Sigmoid colon (tissue), 7 donors: ENCODE measurements at regions of chr11 and their contacts with region 1.

Region 1: GRCh38 chr11:20110908-20111669 is 49.2 kb downstream of the DBX1 start:
- DNase-seq: no peak
- H3K4me3 ChIP-seq: no peak overlapping the region
- H3K27ac ChIP-seq: peak overlapping the region; percentile 79 to 93 (median 88)
- H3K4me1 ChIP-seq: peaks cover 0 to 81% (median 69%) of the 10 kb centered on the region in 4 donors
- H3K27me3 ChIP-seq: no peaks in the 10 kb centered on the region
- CTCF ChIP-seq: peak; percentile 23 to 74 (median 70)
- EP300 ChIP-seq: peak; percentile 44 to 93 (median 89)
- POLR2A ChIP-seq: no peak

Region 2: GRCh38 chr11:19931141-19931770 is 179.8 kb before region 1 on chr11:
- intact Hi-C with region 1: loop called (anchors 1 kb)
- DNase-seq: peak; percentile 91
- H3K4me3 ChIP-seq: peak overlapping the region in 1 of 4 donors; percentile 14
- H3K27ac ChIP-seq: peak overlapping the region; percentile 44 to 82 (median 74)
- H3K4me1 ChIP-seq: peaks cover 0 to 94% (median 88%) of the 10 kb centered on the region in 4 donors
- H3K27me3 ChIP-seq: no peaks in the 10 kb centered on the region
- CTCF ChIP-seq: no peak
- EP300 ChIP-seq: peak in 3 of 4 donors; percentile 42 to 76 (median 61)
- POLR2A ChIP-seq: no peak

Region 3: GRCh38 chr11:20247591-20248007 is 136.5 kb after region 1 on chr11:
- intact Hi-C with region 1: no loop called
- DNase-seq: no peak
- H3K4me3 ChIP-seq: no peak overlapping the region
- H3K27ac ChIP-seq: no peak overlapping the region
- H3K4me1 ChIP-seq: peaks cover 0 to 24% (median 18%) of the 10 kb centered on the region in 4 donors
- H3K27me3 ChIP-seq: no peaks in the 10 kb centered on the region
- CTCF ChIP-seq: no peak
- EP300 ChIP-seq: no peak
- POLR2A ChIP-seq: no peak